ENCODE measurements at regions of chr22 and their contacts with region 1.

Region 1: GRCh38 chr22:30005213-30005857 is 74.9 kb upstream of the HORMAD2 start:
- DNase-seq: peak; percentile 29 to 75 (median 61)
- ATAC-seq: peak; percentile 69
- H3K4me3 ChIP-seq: no peak overlapping the region
- H3K4me3 Mint-ChIP-seq: no peak overlapping the region
- H3K27ac ChIP-seq: no peak overlapping the region
- H3K27ac Mint-ChIP-seq: no peak overlapping the region
- H3K4me1 ChIP-seq: no peaks in the 10 kb centered on the region
- H3K4me1 Mint-ChIP-seq: peaks cover 11% of the 10 kb centered on the region
- H3K27me3 ChIP-seq: no peaks in the 10 kb centered on the region
- H3K27me3 Mint-ChIP-seq: no peaks in the 10 kb centered on the region
- CTCF ChIP-seq: peak; percentile 94

Region 2: GRCh38 chr22:29587938-29588699 is 417.2 kb before region 1 on chr22:
- CTCF ChIA-PET with region 1: interaction called, 4 read pairs
- POLR2A ChIA-PET with region 1: no interaction called
- intact Hi-C with region 1: loop called (anchors 1 kb)
- DNase-seq: no peak
- ATAC-seq: no peak
- H3K4me3 ChIP-seq: no peak overlapping the region
- H3K4me3 Mint-ChIP-seq: no peak overlapping the region
- H3K27ac ChIP-seq: no peak overlapping the region
- H3K27ac Mint-ChIP-seq: peak overlapping the region; percentile 37
- H3K4me1 ChIP-seq: peaks cover 6% of the 10 kb centered on the region
- H3K4me1 Mint-ChIP-seq: peaks cover 9% of the 10 kb centered on the region
- H3K27me3 ChIP-seq: no peaks in the 10 kb centered on the region
- H3K27me3 Mint-ChIP-seq: no peaks in the 10 kb centered on the region
- CTCF ChIP-seq: no peak

Region 3: GRCh38 chr22:29635734-29636357 is 369.5 kb before region 1 on chr22:
- CTCF ChIA-PET with region 1: interaction called, 18 read pairs
- POLR2A ChIA-PET with region 1: no interaction called
- intact Hi-C with region 1: loop called (anchors 1 kb)
- DNase-seq: peak in 2 of 9 experiments; percentile 34 to 51
- ATAC-seq: no peak
- H3K4me3 ChIP-seq: no peak overlapping the region
- H3K4me3 Mint-ChIP-seq: no peak overlapping the region
- H3K27ac ChIP-seq: no peak overlapping the region
- H3K27ac Mint-ChIP-seq: no peak overlapping the region
- H3K4me1 ChIP-seq: no peaks in the 10 kb centered on the region
- H3K4me1 Mint-ChIP-seq: peaks cover 29% of the 10 kb centered on the region
- H3K27me3 ChIP-seq: no peaks in the 10 kb centered on the region
- H3K27me3 Mint-ChIP-seq: no peaks in the 10 kb centered on the region
- CTCF ChIP-seq: peak; percentile 47

Region 4: GRCh38 chr22:29801153-29801552 is 204.2 kb before region 1 on chr22:
- CTCF ChIA-PET with region 1: no interaction called
- POLR2A ChIA-PET with region 1: no interaction called
- intact Hi-C with region 1: loop called (anchors 10 kb)
- DNase-seq: no peak
- ATAC-seq: no peak
- H3K4me3 ChIP-seq: no peak overlapping the region
- H3K4me3 Mint-ChIP-seq: no peak overlapping the region
- H3K27ac ChIP-seq: no peak overlapping the region
- H3K27ac Mint-ChIP-seq: no peak overlapping the region
- H3K4me1 ChIP-seq: no peaks in the 10 kb centered on the region
- H3K4me1 Mint-ChIP-seq: peaks cover 3% of the 10 kb centered on the region
- H3K27me3 ChIP-seq: no peaks in the 10 kb centered on the region
- H3K27me3 Mint-ChIP-seq: no peaks in the 10 kb centered on the region
- CTCF ChIP-seq: no peak

Region 5: DNA sequence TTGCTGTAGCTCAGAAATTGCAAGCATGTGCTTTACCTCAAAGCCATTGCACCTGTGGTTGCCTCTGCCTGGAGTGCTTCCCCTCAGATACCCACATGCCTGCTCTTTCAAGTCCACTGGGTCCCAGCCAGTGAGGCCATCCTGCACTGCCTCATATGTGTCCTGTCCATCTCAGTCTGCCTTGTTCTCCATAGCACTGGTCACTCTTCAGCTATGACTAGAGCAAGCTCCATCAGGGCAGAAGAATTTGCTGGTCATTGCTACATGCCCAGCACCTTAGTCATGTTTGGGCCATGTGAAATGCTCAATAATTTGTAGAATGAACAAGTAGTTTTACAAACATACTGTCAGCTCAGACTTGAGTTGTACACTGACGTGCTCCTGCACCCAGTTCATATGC is 10.5 kb after region 1 on chr22:
- CTCF ChIA-PET with region 1: interaction called, 13 read pairs
- POLR2A ChIA-PET with region 1: no interaction called
- intact Hi-C with region 1: no loop called
- DNase-seq: no peak
- ATAC-seq: no peak
- H3K4me3 ChIP-seq: no peak overlapping the region
- H3K4me3 Mint-ChIP-seq: no peak overlapping the region
- H3K27ac ChIP-seq: no peak overlapping the region
- H3K27ac Mint-ChIP-seq: no peak overlapping the region
- H3K4me1 ChIP-seq: no peaks in the 10 kb centered on the region
- H3K4me1 Mint-ChIP-seq: no peaks in the 10 kb centered on the region
- H3K27me3 ChIP-seq: no peaks in the 10 kb centered on the region
- H3K27me3 Mint-ChIP-seq: no peaks in the 10 kb centered on the region
- CTCF ChIP-seq: no peak

Measured in CD8-positive, alpha-beta T cell (primary cell).